SK-N-SH (cell line): ENCODE measurements at regions of chr1 and their contacts with region 1.

Region 1: DNA sequence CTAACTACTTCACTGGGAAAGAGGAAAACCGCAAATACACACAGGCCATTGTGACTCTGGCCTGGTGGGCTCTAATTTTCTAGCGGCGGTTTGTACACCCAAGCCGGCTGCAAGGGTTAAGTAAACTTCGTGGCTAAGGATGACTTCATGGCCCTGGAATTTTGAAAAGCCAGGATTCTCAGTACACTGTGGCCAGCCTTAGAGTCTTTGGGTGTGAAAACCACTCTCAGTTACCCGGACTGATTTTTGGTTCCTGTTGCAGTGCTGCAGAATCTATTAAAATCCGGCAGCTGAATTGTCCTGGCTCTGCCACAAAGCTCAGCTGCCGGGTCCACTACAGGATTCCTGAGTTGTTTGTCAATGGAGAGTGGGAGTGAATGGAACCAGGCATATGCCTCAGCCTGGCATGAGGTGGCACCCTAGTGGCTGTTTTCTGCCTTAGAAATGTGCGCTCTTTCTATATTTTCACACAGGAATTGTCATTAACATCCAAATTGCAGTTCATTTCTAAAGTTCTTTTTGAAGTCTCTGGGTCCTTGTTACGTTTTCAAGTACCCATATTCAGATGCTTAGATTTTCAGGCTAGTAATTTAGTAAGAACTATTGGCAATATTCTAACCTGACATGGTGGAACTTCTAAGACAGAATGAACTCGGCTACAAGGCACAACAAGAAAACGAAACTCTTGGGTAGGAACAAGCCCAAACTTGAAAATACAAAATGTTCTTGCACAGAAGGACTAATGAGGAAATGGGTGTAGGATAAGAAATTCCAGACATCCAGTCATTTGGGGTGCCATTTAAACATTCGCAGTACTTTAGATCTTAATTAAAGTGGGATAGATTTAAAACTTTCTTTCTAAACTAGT is 255.9 kb downstream of the NFIA start:
- DNase-seq: peak; percentile 73
- H3K4me3 ChIP-seq: peak overlapping the region in 1 of 2 experiments; percentile 18; a peak in 1 of 4 replicates
- H3K27ac ChIP-seq: peak overlapping the region; percentile 59 to 61
- H3K4me1 ChIP-seq: peaks cover 16 to 25% of the 10 kb centered on the region in 2 experiments; a peak in 3 of 4 replicates
- H3K27me3 ChIP-seq: no peaks in the 10 kb centered on the region
- CTCF ChIP-seq: peak; percentile 88
- EP300 ChIP-seq: 0 out of 4 replicates have a peak, but pooled peaks of 1 of the 2 experiments have one; percentile 29
- RAD21 ChIP-seq: peak; percentile 98

Region 2: GRCh38 chr1:60978421-60979357 is 359.5 kb before region 1 on chr1:
- CTCF ChIA-PET with region 1: interaction called, 11 read pairs
- POLR2A ChIA-PET with region 1: no interaction called
- DNase-seq: peak; percentile 32
- H3K4me3 ChIP-seq: no peak overlapping the region
- H3K27ac ChIP-seq: no peak overlapping the region
- H3K4me1 ChIP-seq: peaks cover 0 to 12% of the 10 kb centered on the region in 2 experiments; a peak in 3 of 4 replicates
- H3K27me3 ChIP-seq: no peaks in the 10 kb centered on the region
- CTCF ChIP-seq: peak; percentile 72
- EP300 ChIP-seq: no peak
- RAD21 ChIP-seq: peak; percentile 82

Region 3: DNA sequence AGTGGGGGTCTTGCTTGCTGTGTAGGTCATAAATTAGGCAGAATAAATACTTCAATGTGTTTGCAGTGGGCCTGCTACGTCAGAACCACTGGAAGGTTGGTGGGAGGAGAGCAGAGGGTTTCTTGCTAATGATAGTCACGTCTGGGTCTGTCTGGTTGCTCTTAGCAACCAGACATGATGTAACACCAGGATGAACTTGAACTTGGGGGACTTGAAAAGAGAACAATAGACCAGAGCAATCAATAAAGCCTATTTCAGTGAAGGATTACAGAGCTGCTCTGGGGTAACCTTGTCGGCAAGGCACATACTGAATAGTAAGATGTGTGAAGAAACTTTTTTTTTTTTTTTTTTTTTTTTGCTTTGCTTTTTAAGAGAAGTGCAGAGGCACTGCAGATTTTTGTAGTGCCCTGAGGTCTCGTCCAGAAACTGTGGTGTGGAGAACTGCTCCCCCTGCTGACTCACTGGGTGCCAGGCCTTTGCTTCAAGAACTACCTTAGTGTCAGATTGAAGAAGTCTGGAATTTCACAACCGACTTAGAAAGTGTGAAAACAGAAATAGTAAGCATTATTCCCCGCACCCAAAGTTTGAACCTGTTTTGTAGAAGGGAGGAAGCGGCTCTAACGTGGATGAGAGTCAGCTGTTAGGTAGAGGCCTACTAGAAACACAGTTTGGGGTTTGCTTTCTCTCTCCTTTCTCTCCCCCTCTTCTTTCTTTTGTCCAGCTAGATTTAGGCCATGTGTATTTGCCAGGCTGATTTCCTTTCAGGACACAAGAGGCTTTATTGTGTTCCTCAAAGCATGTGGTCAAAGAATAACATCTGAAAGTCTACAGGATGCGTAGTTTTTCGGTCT is 115.1 kb after region 1 on chr1:
- CTCF ChIA-PET with region 1: interaction called, 18 read pairs
- POLR2A ChIA-PET with region 1: no interaction called
- DNase-seq: peak; percentile 75
- H3K4me3 ChIP-seq: peak overlapping the region; percentile 2 to 14; a peak in 3 of 4 replicates
- H3K27ac ChIP-seq: peak overlapping the region; percentile 78 to 98
- H3K4me1 ChIP-seq: peaks cover 21 to 35% of the 10 kb centered on the region in 2 experiments; a peak in 3 of 4 replicates
- H3K27me3 ChIP-seq: no peaks in the 10 kb centered on the region
- CTCF ChIP-seq: peak; percentile 85
- EP300 ChIP-seq: peak in 1 of 2 experiments; percentile 21; a peak in 1 of 4 replicates
- RAD21 ChIP-seq: peak; percentile 83

Region 4: GRCh38 chr1:61724813-61725694 is 386.8 kb after region 1 on chr1 and contains the start of gene TM2D1:
- CTCF ChIA-PET with region 1: no interaction called
- POLR2A ChIA-PET with region 1: no interaction called
- DNase-seq: peak; percentile 89
- H3K4me3 ChIP-seq: peak within 1 kb of the TSS; percentile 80 to 91
- H3K27ac ChIP-seq: peak within 1 kb of the TSS; percentile 73 to 88
- H3K4me1 ChIP-seq: peaks cover 3 to 4% of the 10 kb centered on the region in 2 experiments; a peak in 1 of 4 replicates
- H3K27me3 ChIP-seq: no peaks in the 10 kb centered on the region
- CTCF ChIP-seq: no peak
- EP300 ChIP-seq: peak in 1 of 2 experiments; percentile 19; a peak in 1 of 4 replicates
- RAD21 ChIP-seq: no peak; the same call in 1 of the 2 replicates
- polyA plus RNA-seq, gene TM2D1: 56.1 and 58.6 TPM in 2 replicates